Ascending aorta (tissue), 2 donors: ENCODE measurements at regions of chr3 and their contacts with region 1.

Region 1: DNA sequence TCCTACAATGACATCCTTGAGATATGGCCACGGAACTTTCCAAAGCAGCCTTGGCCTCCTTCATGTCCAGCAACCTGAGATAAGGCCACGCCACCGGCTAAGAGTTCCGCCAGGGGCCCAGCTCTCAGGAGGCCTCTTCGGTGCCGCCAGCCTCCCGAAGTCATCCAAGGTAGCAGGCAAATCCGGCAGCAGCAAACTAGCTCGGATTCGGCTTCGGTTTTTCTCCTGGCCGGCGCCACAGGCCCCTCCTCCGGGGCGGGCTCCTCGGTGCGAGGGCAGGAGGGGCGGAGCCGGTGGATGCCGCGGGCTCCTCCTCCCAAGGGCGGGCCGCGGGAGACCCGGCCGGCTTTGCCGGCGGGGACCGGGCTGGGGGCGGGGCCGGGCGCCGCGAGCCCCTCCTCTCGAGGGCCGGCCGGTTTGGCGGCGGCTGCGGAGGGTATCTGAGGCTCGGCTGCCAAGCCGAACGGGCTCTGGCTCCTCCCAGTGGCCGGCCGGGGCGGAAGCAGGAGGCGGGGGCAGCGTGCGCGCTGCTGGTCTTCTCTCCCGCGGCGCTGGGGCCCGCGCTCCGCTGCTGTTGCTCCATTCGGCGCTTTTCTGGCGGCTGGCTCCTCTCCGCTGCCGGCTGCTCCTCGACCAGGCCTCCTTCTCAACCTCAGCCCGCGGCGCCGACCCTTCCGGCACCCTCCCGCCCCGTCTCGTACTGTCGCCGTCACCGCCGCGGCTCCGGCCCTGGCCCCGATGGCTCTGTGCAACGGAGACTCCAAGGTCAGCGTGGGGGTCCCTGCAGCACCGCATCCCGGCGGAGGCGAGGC is at the start of gene GMPS:
- DNase-seq: peak; percentile 87 to 97
- H3K4me3 ChIP-seq: peak within 1 kb of the TSS; percentile 77 to 90
- H3K27ac ChIP-seq: peak within 1 kb of the TSS; percentile 96 to 98
- H3K4me1 ChIP-seq: peaks cover 0 to 25% of the 10 kb centered on the region in 2 donors
- H3K27me3 ChIP-seq: no peaks in the 10 kb centered on the region
- CTCF ChIP-seq: peak; percentile 35 to 62 (median 60)
- total RNA-seq, gene GMPS: 17.8 TPM

Region 2: DNA sequence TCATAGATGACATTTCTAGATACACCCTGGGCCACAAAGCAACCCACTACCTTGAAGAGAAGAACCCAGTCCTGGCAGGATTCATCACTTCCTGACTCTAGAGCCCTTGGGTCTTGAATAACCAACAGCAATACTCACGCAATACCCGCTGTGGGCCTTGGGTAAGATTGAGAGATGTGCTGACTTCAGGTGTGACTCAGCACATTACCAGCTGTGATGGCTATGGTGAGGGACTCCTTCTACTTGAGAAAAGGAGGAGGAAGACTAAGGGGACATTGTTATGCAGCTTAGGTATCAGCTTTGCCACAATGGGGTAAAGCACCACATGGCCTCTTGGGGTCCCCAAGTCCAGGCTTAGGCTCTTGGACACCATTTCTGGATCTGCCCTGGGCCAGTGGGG is 79.1 kb before region 1 on chr3:
- intact Hi-C with region 1: no loop called
- DNase-seq: no peak
- H3K4me3 ChIP-seq: no peak overlapping the region
- H3K27ac ChIP-seq: no peak overlapping the region
- H3K4me1 ChIP-seq: no peaks in the 10 kb centered on the region
- H3K27me3 ChIP-seq: no peaks in the 10 kb centered on the region
- CTCF ChIP-seq: no peak

Region 3: DNA sequence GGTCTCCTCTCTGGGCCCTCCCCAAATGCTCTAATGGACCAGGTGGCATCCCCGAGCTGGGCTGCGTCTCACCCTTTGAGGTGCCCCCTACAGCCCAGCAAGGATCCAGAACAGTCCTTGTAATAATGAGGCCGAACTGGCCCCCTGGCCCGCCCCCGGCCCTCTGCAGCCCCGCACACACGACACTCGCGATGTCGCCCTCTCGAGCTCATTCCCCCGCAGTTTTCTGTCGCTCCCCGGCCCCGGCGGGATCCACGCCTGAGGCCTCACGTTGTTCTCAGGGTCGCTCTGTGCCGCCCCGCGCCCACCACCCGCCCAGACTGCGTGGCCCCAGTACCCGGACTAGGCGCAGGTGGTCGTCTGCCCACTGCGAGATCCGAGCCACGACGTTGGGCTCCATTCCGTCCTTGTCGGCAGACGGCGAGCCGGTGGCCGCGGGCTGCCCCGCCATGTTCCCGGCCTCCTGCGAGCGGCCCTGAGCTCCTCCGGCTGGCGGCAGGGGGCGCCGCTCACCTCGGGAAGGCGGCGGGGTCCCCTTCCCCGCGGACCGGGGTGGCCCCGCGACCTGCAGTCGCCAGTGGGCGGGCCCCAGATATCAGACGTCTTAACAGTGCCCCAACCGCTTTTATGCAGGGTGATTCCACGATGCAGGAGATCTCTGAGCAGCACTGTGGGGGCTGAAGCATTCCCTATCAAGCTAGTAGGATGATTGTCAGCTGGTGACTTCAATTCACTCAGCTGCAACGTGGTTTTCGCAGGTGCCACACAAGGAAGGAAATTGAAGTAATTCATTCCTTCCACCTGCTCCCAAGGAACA is 64.3 kb before region 1 on chr3 and contains the start of gene C3orf33:
- intact Hi-C with region 1: loop called (anchors 1 kb)
- DNase-seq: peak in 1 of 2 donors; percentile 78
- H3K4me3 ChIP-seq: peak within 1 kb of the TSS; percentile 82 to 84
- H3K27ac ChIP-seq: peak within 1 kb of the TSS; percentile 79 to 87
- H3K4me1 ChIP-seq: no peaks in the 10 kb centered on the region
- H3K27me3 ChIP-seq: no peaks in the 10 kb centered on the region
- CTCF ChIP-seq: peak; percentile 79 to 89 (median 81)
- total RNA-seq, gene C3orf33: not detected

Region 4: GRCh38 chr3:155963570-155963969 is 93.2 kb after region 1 on chr3:
- intact Hi-C with region 1: no loop called
- DNase-seq: no peak
- H3K4me3 ChIP-seq: no peak overlapping the region
- H3K27ac ChIP-seq: no peak overlapping the region
- H3K4me1 ChIP-seq: no peaks in the 10 kb centered on the region
- H3K27me3 ChIP-seq: no peaks in the 10 kb centered on the region
- CTCF ChIP-seq: no peak

Region 5: DNA sequence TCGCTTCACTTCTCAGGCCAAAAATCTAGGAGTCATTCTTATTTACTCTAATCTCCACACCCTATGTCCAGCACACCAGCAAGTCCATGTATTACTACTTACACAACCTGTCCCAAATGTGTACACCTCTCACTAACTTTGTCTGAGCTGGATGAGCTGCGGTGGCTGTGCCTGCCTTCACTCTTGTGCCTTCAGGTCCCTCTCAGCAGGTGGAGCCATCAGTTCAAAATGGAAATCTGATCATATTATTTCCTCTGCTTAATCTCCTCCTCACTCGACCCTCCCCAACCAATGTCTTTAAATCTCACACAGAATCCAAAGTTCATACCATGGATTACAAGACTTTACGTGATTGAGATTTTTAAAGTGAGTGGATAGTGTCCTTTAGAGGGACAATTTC is 601.8 kb after region 1 on chr3:
- intact Hi-C with region 1: no loop called
- DNase-seq: no peak
- H3K4me3 ChIP-seq: no peak overlapping the region
- H3K27ac ChIP-seq: no peak overlapping the region
- H3K4me1 ChIP-seq: peaks cover 0 to 18% of the 10 kb centered on the region in 2 donors
- H3K27me3 ChIP-seq: no peaks in the 10 kb centered on the region
- CTCF ChIP-seq: no peak